Testis (tissue), 5 donors: ENCODE measurements at regions of chr12 and their contacts with region 1.

Region 1: DNA sequence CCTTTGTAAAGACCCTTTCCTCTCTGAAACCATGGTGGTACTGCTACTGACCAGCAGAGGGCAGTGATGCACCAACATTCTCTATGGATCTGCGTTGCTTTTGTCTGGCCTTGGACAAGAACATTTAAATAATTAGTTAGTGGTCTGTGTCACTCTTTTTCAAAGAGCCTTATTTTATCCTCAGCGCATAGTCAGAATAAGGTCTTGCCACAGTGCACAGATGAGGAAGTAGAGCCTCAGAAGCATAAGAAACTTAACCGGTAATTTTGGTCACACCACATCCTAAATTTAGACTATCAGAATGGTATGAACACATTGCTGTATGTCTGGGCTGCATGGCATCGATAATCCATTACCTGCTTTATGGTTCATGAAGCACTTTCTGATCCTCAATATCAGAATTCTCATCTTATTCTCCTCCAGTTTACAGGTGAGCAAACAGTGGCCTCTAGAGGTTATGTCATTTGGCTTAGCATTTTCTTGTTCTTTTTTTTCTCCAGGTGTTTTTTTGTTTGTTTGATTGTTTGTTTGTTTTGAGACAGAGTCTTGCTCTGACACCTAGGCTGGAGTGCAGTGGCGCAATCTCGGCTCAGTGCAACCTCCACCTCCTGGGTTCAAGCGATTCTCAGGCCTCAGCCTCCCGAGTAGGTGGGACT is 23.7 kb upstream of the IFT81 start:
- DNase-seq: peak; percentile 83
- H3K4me3 ChIP-seq: no peak overlapping the region
- H3K27ac ChIP-seq: peak overlapping the region in 1 of 2 donors; percentile 43
- H3K4me1 ChIP-seq: no peaks in the 10 kb centered on the region
- H3K27me3 ChIP-seq: no peaks in the 10 kb centered on the region
- CTCF ChIP-seq: peak; percentile 87 to 98 (median 97)
- POLR2A ChIP-seq: no peak

Region 2: GRCh38 chr12:110149086-110149660 is 48.7 kb after region 1 on chr12:
- intact Hi-C with region 1: no loop called
- DNase-seq: no peak
- H3K4me3 ChIP-seq: no peak overlapping the region
- H3K27ac ChIP-seq: no peak overlapping the region
- H3K4me1 ChIP-seq: no peaks in the 10 kb centered on the region
- H3K27me3 ChIP-seq: no peaks in the 10 kb centered on the region
- CTCF ChIP-seq: no peak
- POLR2A ChIP-seq: no peak

Region 3: DNA sequence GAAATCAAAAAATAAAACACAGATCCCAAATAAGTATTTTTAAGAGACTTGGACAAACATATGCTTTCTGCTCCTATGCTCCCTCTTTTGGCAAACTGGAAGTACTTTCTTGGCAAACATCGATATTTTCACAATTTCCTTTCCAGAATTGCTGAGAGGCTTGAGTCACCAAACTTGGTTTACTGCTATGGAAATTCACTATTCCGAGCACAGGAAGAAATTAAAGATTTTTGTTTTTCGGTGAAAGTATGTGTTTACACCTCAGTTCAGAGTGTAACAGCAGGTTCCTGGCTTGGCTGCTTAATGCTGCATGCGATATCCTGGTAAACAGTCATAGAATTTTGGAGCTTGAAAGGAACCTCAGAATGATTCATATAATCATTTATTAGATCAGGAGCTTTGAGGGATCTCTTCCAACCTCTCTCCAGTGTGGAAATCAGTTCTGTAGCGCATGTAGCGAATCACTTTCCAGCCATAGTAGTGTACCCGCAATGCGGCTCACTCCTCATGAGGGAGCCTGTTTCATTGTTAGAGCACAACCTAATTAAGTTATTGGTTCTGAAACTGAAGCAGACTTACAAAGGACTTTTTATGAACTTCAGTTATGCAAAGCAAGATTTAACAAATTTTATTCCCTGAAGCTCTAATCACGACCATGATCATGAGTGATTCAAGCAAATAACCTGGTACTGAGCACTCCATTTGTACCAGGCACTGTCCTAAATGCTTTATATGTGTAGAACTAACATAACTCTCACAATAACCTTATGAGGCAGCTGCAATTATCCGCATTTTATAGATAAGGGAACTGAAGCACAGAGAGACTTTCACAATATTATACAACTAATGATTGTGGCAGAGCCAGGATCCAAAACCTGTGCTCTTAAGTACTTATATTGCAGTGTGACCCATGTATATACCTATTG is 124.2 kb after region 1 on chr12:
- intact Hi-C with region 1: loop called (anchors 10 kb)
- DNase-seq: no peak
- H3K4me3 ChIP-seq: no peak overlapping the region
- H3K27ac ChIP-seq: peak overlapping the region; percentile 72 to 74
- H3K4me1 ChIP-seq: peaks cover 39% of the 10 kb centered on the region
- H3K27me3 ChIP-seq: no peaks in the 10 kb centered on the region
- CTCF ChIP-seq: peak; percentile 23 to 54 (median 41)
- POLR2A ChIP-seq: no peak

Region 4: DNA sequence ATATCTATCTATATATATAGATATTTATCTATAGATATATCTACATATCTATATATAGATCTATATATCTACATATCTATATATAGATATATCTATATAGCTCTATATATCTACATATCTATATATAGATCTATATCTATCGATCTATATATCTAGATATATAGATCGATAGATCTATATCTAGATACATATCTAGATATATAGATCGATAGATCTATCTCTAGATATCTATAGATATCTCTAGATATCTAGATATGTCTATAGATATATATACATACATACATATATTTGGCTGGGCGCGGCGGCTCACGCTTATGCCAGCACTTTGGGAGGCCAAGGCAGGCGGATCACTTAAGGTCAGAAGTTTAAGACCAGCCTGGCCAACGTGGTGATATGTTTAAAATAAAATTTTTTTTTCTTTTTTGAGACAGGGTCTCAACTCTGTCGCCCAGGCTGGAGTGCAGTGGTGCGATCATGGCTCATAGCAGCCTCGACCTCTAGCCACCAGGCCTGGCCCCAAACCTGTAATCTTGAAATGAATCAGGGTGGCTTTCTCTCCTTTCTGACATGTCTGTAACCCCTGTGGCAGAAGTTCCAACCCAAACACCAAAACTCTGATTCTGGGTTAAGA is 331.6 kb after region 1 on chr12:
- intact Hi-C with region 1: loop called (anchors 10 kb)
- DNase-seq: no peak
- H3K4me3 ChIP-seq: peak overlapping the region; percentile 56 to 64
- H3K27ac ChIP-seq: peak overlapping the region; percentile 59 to 68
- H3K4me1 ChIP-seq: no peaks in the 10 kb centered on the region
- H3K27me3 ChIP-seq: no peaks in the 10 kb centered on the region
- CTCF ChIP-seq: no peak
- POLR2A ChIP-seq: no peak